ENCODE measurements at regions of chr3 and their contacts with region 1.

Region 1: GRCh38 chr3:188700501-188700900 is 471.3 kb upstream of the TPRG1 start:
- DNase-seq: peak; percentile 52
- H3K4me3 Mint-ChIP-seq: no peak overlapping the region
- H3K27ac Mint-ChIP-seq: no peak overlapping the region
- H3K4me1 Mint-ChIP-seq: peaks cover 30% of the 10 kb centered on the region
- H3K27me3 Mint-ChIP-seq: no peaks in the 10 kb centered on the region

Region 2: DNA sequence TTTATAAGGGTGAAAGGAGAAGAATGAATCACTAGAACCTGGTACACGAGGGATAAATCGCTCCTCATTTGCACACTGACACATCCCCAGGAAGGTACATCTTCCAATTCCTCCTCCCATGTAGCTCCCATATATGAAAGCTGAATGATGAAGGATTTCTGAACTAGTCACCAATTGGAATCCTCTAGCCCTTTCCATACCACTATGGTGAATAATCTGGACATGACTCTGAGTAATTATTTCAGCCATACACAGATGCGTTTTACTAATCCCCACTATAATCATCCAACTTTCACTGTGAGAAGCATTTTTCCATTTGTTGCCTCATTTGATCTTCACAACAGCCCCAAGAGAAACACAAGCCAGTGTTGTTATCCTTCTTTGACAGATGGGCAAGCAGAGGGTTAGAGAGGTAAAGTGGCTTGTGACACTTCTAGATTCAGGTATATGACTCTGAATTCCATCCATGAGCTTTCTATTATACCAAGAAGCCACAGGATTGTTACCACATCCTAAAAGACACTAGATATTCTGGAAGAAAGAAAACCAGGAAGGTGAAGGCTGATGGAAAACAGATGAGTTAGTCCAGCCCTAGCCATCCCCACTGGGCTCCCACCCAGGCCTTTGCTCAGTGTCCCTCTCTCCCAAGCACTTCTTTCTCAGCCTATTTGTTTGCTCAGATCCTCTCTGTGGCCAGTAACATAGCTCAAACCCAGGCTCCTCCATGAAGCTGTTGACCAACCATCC is 933.1 kb before region 1 on chr3:
- CTCF ChIA-PET with region 1: no interaction called
- intact Hi-C with region 1: no loop called
- DNase-seq: no peak
- H3K4me3 Mint-ChIP-seq: no peak overlapping the region
- H3K27ac Mint-ChIP-seq: no peak overlapping the region
- H3K4me1 Mint-ChIP-seq: peaks cover 36% of the 10 kb centered on the region
- H3K27me3 Mint-ChIP-seq: no peaks in the 10 kb centered on the region

Region 3: DNA sequence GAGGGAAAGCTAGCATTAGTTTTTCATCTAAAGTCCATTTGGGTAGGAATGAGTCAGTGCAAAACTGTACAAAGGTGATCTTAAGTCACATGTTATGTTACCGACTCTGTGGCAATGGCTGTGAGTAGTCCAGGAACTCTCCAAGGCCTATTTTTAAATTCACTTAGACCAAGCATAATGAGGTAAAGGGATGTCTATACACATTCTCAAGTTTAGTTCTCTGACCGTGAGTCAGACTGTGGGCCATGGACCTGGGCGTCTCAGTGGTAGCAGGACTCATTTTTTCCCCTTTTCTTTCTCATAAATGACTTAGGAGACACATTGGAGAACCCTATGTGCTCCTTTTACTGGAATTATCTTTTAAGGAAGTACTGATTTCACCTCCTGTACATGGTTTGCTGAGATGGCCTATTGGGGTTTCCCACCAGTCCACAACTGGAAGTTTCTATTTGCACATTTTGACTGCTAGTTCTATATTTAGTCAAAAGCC is 17.4 kb before region 1 on chr3:
- CTCF ChIA-PET with region 1: no interaction called
- intact Hi-C with region 1: loop called (anchors 1 kb)
- DNase-seq: peak; percentile 51
- H3K4me3 Mint-ChIP-seq: no peak overlapping the region
- H3K27ac Mint-ChIP-seq: peak overlapping the region; percentile 37
- H3K4me1 Mint-ChIP-seq: peaks cover 32% of the 10 kb centered on the region
- H3K27me3 Mint-ChIP-seq: no peaks in the 10 kb centered on the region

Region 4: DNA sequence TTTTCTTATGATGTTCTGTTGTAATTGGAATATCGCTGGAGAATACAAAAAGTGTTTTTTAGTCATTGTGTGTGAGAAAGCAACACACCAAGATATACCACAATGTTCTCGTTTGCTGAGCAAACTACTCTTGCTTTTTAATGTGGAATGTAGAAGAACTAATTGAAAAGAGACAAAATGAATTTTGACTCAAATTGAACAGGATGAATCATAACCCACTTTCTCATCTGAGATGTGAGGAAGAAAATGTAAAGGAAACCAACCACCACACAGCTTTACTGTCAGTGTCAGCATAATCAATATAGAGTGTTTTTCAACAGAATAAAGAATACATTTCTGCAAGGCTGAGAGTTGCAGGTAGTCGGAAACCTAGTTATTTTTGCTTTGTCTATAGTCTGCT is 22.5 kb after region 1 on chr3:
- CTCF ChIA-PET with region 1: no interaction called
- intact Hi-C with region 1: loop called (anchors 1 kb)
- DNase-seq: no peak
- H3K4me3 Mint-ChIP-seq: no peak overlapping the region
- H3K27ac Mint-ChIP-seq: no peak overlapping the region
- H3K4me1 Mint-ChIP-seq: peaks cover 26% of the 10 kb centered on the region
- H3K27me3 Mint-ChIP-seq: peaks cover 2% of the 10 kb centered on the region

Region 5: GRCh38 chr3:188947401-188948280 is 247.1 kb after region 1 on chr3:
- CTCF ChIA-PET with region 1: no interaction called
- intact Hi-C with region 1: loop called (anchors 1 kb)
- DNase-seq: peak; percentile 61
- H3K4me3 Mint-ChIP-seq: no peak overlapping the region
- H3K27ac Mint-ChIP-seq: no peak overlapping the region
- H3K4me1 Mint-ChIP-seq: peaks cover 35% of the 10 kb centered on the region
- H3K27me3 Mint-ChIP-seq: peaks cover 18% of the 10 kb centered on the region